Mammary epithelial cell (primary cell): ENCODE measurements at regions of chr13 and their contacts with region 1.

Region 1: GRCh38 chr13:73074036-73074435 is 15.2 kb downstream of the KLF5 start:
- DNase-seq: no peak
- H3K4me3 ChIP-seq: no peak overlapping the region
- H3K27ac ChIP-seq: no peak overlapping the region
- H3K4me1 ChIP-seq: no peaks in the 10 kb centered on the region
- H3K27me3 ChIP-seq: no peaks in the 10 kb centered on the region
- CTCF ChIP-seq: no peak

Region 2: GRCh38 chr13:73039181-73040108 is 34.6 kb before region 1 on chr13:
- CTCF ChIA-PET with region 1: no interaction called
- dilution Hi-C with region 1: no loop called
- in situ Hi-C with region 1: no loop called
- intact Hi-C with region 1: no loop called
- DNase-seq: no peak
- H3K4me3 ChIP-seq: no peak overlapping the region
- H3K27ac ChIP-seq: no peak overlapping the region
- H3K4me1 ChIP-seq: no peaks in the 10 kb centered on the region
- H3K27me3 ChIP-seq: no peaks in the 10 kb centered on the region
- CTCF ChIP-seq: peak in 1 of 2 donors; percentile 4

Region 3: GRCh38 chr13:73215807-73216206 is 141.8 kb after region 1 on chr13:
- CTCF ChIA-PET with region 1: no interaction called
- dilution Hi-C with region 1: no loop called
- in situ Hi-C with region 1: loop called in 1 of 2 experiments (anchors 10 kb)
- intact Hi-C with region 1: no loop called
- DNase-seq: peak; percentile 76
- H3K4me3 ChIP-seq: no peak overlapping the region
- H3K27ac ChIP-seq: peak overlapping the region; percentile 56
- H3K4me1 ChIP-seq: peaks cover 15% of the 10 kb centered on the region
- H3K27me3 ChIP-seq: no peaks in the 10 kb centered on the region
- CTCF ChIP-seq: no peak

Region 4: DNA sequence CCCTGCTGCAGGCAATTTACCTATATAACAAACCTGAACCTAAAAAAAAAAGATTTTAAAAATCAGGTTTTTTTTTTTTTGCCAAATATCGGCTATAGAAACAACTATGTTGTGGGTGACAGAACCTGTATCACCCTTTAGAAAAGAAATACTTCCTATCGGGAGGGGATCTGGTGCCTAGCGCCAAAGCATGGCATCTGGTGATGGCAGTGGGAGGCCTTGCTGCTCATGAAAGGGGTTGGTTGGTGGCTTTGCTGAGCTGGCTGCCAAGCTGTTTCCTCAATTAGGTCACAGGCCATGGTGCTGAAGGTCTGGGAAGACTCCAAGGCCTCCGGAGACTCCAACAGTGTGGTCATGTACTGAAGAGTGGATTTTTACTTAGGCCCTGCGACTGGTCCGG is 313.3 kb after region 1 on chr13:
- CTCF ChIA-PET with region 1: no interaction called
- dilution Hi-C with region 1: no loop called
- in situ Hi-C with region 1: no loop called
- intact Hi-C with region 1: no loop called
- DNase-seq: no peak
- H3K4me3 ChIP-seq: no peak overlapping the region
- H3K27ac ChIP-seq: no peak overlapping the region
- H3K4me1 ChIP-seq: peaks cover 7% of the 10 kb centered on the region
- H3K27me3 ChIP-seq: no peaks in the 10 kb centered on the region
- CTCF ChIP-seq: no peak

Region 5: GRCh38 chr13:73535341-73535740 is 461.3 kb after region 1 on chr13:
- CTCF ChIA-PET with region 1: no interaction called
- dilution Hi-C with region 1: no loop called
- in situ Hi-C with region 1: no loop called
- intact Hi-C with region 1: loop called (anchors 5 kb)
- DNase-seq: no peak
- H3K4me3 ChIP-seq: no peak overlapping the region
- H3K27ac ChIP-seq: no peak overlapping the region
- H3K4me1 ChIP-seq: peaks cover 4% of the 10 kb centered on the region
- H3K27me3 ChIP-seq: no peaks in the 10 kb centered on the region
- CTCF ChIP-seq: no peak